ENCODE measurements at regions of chr9 and their contacts with region 1.

Region 1: GRCh38 chr9:35001803-35002502 is 12.4 kb downstream of the DNAJB5 start:
- DNase-seq: no peak
- H3K4me3 ChIP-seq: no peak overlapping the region
- CTCF ChIP-seq: no peak

Region 2: GRCh38 chr9:34957492-34958410 is 44.2 kb before region 1 on chr9 and contains the start of gene PHF24:
- in situ Hi-C with region 1: no loop called
- DNase-seq: no peak
- H3K4me3 ChIP-seq: peak within 1 kb of the TSS; percentile 21
- CTCF ChIP-seq: no peak

Region 3: GRCh38 chr9:35042081-35042604 is 40.2 kb after region 1 on chr9:
- in situ Hi-C with region 1: loop called (anchors 5 kb)
- DNase-seq: no peak
- H3K4me3 ChIP-seq: no peak overlapping the region
- CTCF ChIP-seq: no peak

Region 4: GRCh38 chr9:35091536-35091935 is 89.6 kb after region 1 on chr9:
- in situ Hi-C with region 1: loop called (anchors 5 kb)
- DNase-seq: no peak
- H3K4me3 ChIP-seq: no peak overlapping the region
- CTCF ChIP-seq: no peak

Region 5: GRCh38 chr9:35161713-35162604 is 160.0 kb after region 1 on chr9 and contains the start of gene UNC13B:
- in situ Hi-C with region 1: no loop called
- DNase-seq: peak; percentile 69
- H3K4me3 ChIP-seq: peak within 1 kb of the TSS; percentile 85
- CTCF ChIP-seq: no peak